Activated T-helper 1 cell treated with anti-CD3 and anti-CD28 coated beads, Interleukin-12 subunit alpha, Interleukin-12 subunit beta, Interleukin-2, Interleukin-4 antibody, amounts not matched to agents 30 ng/mL and 10 ng/mL and 1 ng/mL, durations not matched to agents 14 hours and 24 hours and 36 hours (primary cell): ENCODE measurements at regions of chr20 and their contacts with region 1.

Region 1: DNA sequence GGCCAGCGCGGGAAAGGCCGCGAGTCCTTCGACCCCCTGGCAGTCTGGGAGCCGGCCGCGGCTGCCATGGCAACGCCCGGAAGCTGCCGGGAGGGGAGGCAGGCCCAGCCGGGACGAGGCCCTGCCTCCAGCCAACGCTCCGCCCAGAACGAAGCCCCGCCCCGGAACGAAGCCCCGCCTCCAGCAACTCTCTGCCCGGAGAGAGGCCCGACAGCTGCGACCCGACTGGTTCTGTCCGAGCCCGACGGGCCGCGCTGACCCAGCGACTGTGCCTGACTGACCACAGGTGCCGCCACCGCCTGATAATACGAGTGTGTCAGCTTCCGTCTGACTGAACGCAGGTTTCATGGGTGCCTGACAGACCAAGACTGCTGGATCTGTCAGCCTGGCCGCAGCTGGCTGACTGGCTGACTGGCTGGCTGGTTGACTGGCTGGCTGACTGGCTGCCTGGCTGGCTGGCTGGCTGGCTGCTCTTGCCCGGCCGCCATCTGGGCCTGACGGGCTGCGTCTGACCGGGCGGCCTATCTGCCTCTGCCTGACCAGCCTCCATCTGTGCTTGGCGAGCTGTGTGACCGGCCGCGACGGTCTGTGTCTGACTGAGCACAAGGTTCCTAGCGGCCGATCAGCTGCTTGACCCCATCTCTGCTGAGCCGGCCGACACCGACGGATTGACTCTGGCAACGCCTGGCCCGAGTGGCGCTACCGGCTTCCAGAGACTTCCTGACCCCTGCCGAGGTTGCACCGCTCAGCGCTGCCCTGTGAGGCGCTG is 89.7 kb upstream of the EPB41L1 start:
- DNase-seq: peak; percentile 85
- H3K4me3 Mint-ChIP-seq: peak overlapping the region; percentile 83
- H3K27ac Mint-ChIP-seq: no peak overlapping the region
- H3K4me1 Mint-ChIP-seq: no peaks in the 10 kb centered on the region
- H3K27me3 Mint-ChIP-seq: peaks cover 37% of the 10 kb centered on the region

Region 2: DNA sequence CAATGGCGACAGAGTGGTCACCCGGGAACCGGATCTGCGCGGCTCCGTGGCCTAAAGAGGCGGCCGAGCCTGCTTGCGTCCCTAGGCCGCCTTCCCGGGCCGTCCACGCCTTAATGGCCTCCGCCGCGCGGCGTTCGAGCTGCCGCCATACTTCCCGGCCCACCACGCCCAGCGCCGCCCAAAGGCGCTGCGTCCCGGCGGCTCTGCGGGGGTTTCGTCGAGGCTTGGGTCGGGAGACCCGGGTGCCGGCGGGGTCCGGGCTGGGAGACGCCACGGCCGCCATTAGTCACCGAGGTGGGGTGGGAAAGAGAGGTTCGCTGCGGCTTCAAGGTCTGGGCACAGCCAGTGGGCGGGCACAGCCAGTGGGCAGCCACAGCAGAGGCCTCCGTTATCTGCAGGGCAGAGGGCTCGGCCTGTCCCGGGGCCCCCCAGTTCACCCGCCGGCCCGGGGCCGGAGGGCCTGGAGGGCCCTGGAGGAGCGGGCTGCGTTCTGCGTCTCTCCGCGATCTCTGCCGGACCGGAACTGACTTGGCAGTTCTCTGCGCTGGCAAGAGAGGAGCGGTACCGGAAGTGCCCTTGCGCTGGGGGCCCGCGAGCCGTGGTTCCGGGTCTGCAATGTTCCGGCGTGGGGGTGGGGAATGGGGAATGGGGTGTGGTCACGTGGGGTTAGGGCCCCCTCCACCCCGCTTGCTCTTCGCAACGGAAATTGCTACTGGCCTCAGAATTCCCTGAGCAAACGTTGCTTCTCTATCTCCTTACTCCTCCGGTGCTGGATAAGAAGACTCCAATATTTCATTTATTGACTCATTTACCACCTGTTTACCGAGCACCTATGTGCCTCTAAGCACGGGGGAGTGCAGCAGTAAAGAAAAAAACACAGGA is 14.2 kb before region 1 on chr20:
- intact Hi-C with region 1: loop called (anchors 1 kb)
- DNase-seq: peak; percentile 81
- H3K4me3 Mint-ChIP-seq: peak overlapping the region; percentile 97
- H3K27ac Mint-ChIP-seq: peak overlapping the region; percentile 90
- H3K4me1 Mint-ChIP-seq: peaks cover 39% of the 10 kb centered on the region
- H3K27me3 Mint-ChIP-seq: peaks cover 7% of the 10 kb centered on the region

Region 3: GRCh38 chr20:36093025-36093803 is 28.4 kb after region 1 on chr20:
- intact Hi-C with region 1: loop called (anchors 2 kb)
- DNase-seq: no peak
- H3K4me3 Mint-ChIP-seq: peak overlapping the region; percentile 85
- H3K27ac Mint-ChIP-seq: no peak overlapping the region
- H3K4me1 Mint-ChIP-seq: peaks cover 12% of the 10 kb centered on the region
- H3K27me3 Mint-ChIP-seq: peaks cover 50% of the 10 kb centered on the region